SK-N-SH (cell line): ENCODE measurements at regions of chrX and their contacts with region 1.

Region 1: DNA sequence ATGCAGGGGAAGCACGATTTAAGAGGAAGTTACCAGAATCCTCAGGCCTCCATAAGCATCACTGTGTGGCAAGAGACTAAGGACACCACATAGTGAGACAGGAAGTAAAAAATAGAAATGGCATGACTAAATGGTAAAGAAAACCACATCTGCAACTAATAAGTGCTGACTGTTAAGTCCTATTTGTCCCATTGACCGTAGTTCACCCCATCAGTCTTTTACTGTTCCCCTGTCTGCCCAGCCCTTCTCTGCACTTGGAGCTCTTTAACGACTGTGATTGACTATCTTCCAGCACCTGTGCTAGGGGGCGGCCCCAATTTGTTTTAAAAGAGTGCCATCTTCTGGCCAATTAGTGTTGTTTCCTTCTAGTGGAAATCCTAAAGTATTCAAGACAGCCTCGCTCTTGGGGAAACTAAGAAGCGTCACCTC is 94.2 kb downstream of the MAOA start:
- DNase-seq: peak; percentile 48
- H3K4me3 ChIP-seq: no peak overlapping the region
- H3K27ac ChIP-seq: no peak overlapping the region
- H3K4me1 ChIP-seq: no peaks in the 10 kb centered on the region
- H3K27me3 ChIP-seq: no peaks in the 10 kb centered on the region
- CTCF ChIP-seq: peak; percentile 66
- EP300 ChIP-seq: no peak
- RAD21 ChIP-seq: peak; percentile 85

Region 2: GRCh38 chrX:43557792-43558191 is 192.5 kb before region 1 on chrX:
- CTCF ChIA-PET with region 1: interaction called, 63 read pairs
- POLR2A ChIA-PET with region 1: no interaction called
- DNase-seq: peak; percentile 39
- H3K4me3 ChIP-seq: no peak overlapping the region
- H3K27ac ChIP-seq: no peak overlapping the region
- H3K4me1 ChIP-seq: no peaks in the 10 kb centered on the region
- H3K27me3 ChIP-seq: peaks cover 3% of the 10 kb centered on the region; the same call in 1 of the 2 replicates
- CTCF ChIP-seq: peak; percentile 78
- EP300 ChIP-seq: no peak
- RAD21 ChIP-seq: peak; percentile 87

Region 3: DNA sequence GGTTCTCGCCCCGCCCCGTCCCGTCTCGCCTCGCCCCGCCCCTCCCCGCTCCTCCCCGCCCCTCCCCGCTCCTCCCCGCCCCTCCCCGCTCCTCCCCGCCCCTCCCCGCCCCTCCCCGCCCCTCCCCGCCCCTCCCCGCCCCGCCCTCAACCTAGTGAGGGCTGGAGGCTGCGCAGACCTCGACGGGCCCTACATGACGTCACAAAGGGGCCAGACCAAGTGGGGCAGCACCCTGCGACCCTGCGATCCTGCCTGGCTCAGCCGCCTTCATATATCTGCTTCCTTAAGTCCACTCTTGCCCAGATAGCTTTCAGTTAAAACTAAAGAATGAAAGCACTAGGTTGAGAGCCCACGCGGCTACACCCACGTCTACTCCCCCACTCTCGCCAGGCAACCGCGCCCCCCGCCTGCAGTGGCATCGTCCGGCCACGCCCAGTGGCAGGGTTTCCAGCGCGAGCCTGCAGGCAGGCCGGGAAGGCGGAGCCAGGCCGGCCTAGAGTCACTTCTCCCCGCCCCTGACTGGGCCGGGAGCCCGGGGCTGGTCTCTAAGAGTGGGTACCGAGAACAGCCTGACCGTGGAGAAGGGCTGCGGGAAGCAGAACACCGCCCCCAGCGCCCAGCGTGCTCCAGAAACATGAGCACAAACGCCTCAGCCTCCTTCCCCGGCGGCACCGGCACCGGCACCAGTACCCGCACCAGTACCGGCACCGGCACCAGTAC is 95.7 kb before region 1 on chrX:
- CTCF ChIA-PET with region 1: interaction called, 12 read pairs
- POLR2A ChIA-PET with region 1: no interaction called
- DNase-seq: peak; percentile 90
- H3K4me3 ChIP-seq: peak overlapping the region; percentile 53 to 62
- H3K27ac ChIP-seq: peak overlapping the region; percentile 73 to 86
- H3K4me1 ChIP-seq: peaks cover 0 to 2% of the 10 kb centered on the region in 2 experiments; a peak in 2 of 4 replicates
- H3K27me3 ChIP-seq: no peaks in the 10 kb centered on the region
- CTCF ChIP-seq: peak; percentile 40
- EP300 ChIP-seq: 0 out of 4 replicates have a peak, but pooled peaks of 1 of the 2 experiments have one; percentile 19
- RAD21 ChIP-seq: peak; percentile 30; the same call in 1 of the 2 replicates

Region 4: DNA sequence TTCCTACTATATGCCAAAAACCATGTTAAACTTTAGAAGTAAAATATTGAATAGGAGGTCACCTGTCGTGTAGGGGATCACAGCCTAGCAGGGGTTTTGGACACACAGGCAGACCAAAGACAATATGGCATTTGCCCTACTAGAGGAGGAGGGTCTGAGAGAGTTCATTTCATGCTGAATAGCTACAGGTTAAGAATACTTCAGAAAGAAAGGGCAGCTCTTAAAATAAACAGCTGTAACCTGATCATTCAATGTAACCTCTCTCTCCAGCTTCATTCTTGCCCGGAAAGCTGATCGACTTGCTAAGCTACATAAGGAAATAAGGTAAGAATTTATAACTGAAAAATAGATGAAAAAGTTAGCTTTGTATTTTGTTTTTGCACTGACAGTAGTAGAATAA is 14.3 kb before region 1 on chrX:
- CTCF ChIA-PET with region 1: interaction called, 16 read pairs
- POLR2A ChIA-PET with region 1: no interaction called
- DNase-seq: no peak
- H3K4me3 ChIP-seq: no peak overlapping the region
- H3K27ac ChIP-seq: no peak overlapping the region
- H3K4me1 ChIP-seq: no peaks in the 10 kb centered on the region
- H3K27me3 ChIP-seq: no peaks in the 10 kb centered on the region; the same call in 1 of the 2 replicates
- CTCF ChIP-seq: no peak
- EP300 ChIP-seq: no peak
- RAD21 ChIP-seq: no peak